Activated CD8-positive, alpha-beta T cell treated with anti-CD3 and anti-CD28 coated beads for 36 hours (primary cell): ENCODE measurements at regions of chr5 and their contacts with region 1.

Region 1: DNA sequence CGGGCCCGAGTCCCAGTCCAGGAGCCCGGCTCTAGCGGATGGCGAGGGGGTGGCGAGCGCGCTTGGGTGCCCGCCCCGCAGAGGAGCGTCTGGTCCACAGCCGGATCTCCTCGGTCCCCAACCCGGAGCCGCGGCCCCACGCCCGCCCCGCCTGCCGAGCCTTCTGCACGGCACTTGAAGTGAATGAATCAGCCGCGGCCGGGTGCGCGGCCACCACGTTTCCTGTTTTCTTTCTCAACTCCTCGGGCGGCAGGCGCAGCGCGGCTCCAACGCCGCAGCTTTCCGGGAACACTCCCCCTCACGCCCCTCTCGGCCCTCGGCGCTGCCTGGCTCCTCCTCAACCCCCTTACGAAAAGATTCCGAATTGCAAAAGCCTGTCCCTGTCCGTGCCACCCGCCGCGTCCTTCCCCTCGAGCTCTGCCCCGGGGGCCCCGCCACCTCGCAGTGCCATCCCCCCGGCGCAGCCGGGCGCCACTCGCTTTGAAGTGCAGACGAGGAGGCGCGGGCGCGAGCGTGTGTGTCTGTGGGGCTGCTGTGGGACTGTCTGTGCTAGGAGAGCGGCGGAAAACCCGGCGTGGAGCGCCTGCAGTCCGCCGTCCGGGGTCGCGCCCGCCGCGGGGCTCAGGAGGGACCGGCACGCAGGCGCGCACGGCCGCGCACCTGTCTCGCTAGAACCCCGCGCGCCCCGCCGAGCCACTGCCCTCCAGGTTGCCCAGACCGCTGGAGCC is 456.6 kb downstream of the RAB3C start:
- DNase-seq: peak; percentile 96
- ATAC-seq: peak; percentile 74
- H3K4me3 Mint-ChIP-seq: peak overlapping the region; percentile 89
- H3K27ac Mint-ChIP-seq: peak overlapping the region; percentile 85
- H3K4me1 Mint-ChIP-seq: peaks cover 38% of the 10 kb centered on the region
- H3K27me3 Mint-ChIP-seq: no peaks in the 10 kb centered on the region
- CTCF ChIP-seq: no peak

Region 2: GRCh38 chr5:59086024-59086423 is 46.6 kb after region 1 on chr5:
- CTCF ChIA-PET with region 1: interaction called, 15 read pairs
- POLR2A ChIA-PET with region 1: no interaction called
- intact Hi-C with region 1: no loop called
- DNase-seq: no peak
- ATAC-seq: no peak
- H3K4me3 Mint-ChIP-seq: no peak overlapping the region
- H3K27ac Mint-ChIP-seq: no peak overlapping the region
- H3K4me1 Mint-ChIP-seq: no peaks in the 10 kb centered on the region
- H3K27me3 Mint-ChIP-seq: peaks cover 4% of the 10 kb centered on the region
- CTCF ChIP-seq: no peak

Region 3: DNA sequence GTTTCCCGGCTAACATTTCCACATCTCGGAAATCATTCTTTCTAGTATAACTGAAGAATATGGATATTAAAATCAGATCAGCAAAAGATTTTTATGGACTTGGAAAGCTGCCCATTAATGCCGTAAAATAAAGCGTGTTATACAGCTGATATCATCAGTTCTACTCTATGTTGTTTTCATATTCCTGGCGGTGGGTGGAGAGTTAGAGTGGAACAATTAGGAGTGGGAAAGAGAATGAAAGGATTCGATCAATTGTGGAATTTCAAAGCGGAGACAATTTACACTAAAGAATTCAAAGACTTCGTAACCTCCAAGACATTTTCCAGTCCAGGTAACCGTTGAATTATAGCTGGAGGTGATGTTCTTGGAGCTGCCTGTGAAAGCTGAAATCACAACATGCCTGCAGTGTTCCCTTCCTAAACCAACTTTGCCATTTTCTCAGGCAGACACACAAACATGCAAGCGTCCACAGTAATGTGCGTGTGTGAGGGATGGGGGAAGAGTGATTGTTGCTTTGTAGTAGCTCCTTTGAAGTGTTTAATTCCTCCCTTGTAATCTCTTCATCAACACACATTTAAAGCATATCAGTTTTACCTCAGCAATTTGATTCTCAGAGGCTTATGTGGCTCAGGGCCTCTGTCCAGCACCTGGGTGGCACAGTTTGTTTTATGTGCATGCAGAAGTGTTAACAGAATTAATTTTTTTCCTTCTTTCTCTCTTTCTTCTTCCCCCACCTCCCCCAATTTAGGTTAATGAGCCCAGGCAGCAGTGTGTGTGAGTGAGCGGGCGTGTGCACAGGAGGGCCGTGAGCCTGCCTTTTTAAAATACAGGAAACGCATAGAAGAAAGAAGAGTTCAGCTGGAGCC is 87.5 kb after region 1 on chr5:
- CTCF ChIA-PET with region 1: interaction called, 36 read pairs
- POLR2A ChIA-PET with region 1: interaction called, 35 read pairs
- intact Hi-C with region 1: loop called (anchors 2 kb)
- DNase-seq: no peak
- ATAC-seq: peak; percentile 11
- H3K4me3 Mint-ChIP-seq: no peak overlapping the region
- H3K27ac Mint-ChIP-seq: no peak overlapping the region
- H3K4me1 Mint-ChIP-seq: peaks cover 33% of the 10 kb centered on the region
- H3K27me3 Mint-ChIP-seq: no peaks in the 10 kb centered on the region
- CTCF ChIP-seq: no peak

Region 4: GRCh38 chr5:59158165-59158564 is 118.7 kb after region 1 on chr5:
- CTCF ChIA-PET with region 1: interaction called, 33 read pairs
- POLR2A ChIA-PET with region 1: no interaction called
- intact Hi-C with region 1: no loop called
- DNase-seq: no peak
- ATAC-seq: peak; percentile 36
- H3K4me3 Mint-ChIP-seq: no peak overlapping the region
- H3K27ac Mint-ChIP-seq: no peak overlapping the region
- H3K4me1 Mint-ChIP-seq: peaks cover 22% of the 10 kb centered on the region
- H3K27me3 Mint-ChIP-seq: no peaks in the 10 kb centered on the region
- CTCF ChIP-seq: no peak

Region 5: DNA sequence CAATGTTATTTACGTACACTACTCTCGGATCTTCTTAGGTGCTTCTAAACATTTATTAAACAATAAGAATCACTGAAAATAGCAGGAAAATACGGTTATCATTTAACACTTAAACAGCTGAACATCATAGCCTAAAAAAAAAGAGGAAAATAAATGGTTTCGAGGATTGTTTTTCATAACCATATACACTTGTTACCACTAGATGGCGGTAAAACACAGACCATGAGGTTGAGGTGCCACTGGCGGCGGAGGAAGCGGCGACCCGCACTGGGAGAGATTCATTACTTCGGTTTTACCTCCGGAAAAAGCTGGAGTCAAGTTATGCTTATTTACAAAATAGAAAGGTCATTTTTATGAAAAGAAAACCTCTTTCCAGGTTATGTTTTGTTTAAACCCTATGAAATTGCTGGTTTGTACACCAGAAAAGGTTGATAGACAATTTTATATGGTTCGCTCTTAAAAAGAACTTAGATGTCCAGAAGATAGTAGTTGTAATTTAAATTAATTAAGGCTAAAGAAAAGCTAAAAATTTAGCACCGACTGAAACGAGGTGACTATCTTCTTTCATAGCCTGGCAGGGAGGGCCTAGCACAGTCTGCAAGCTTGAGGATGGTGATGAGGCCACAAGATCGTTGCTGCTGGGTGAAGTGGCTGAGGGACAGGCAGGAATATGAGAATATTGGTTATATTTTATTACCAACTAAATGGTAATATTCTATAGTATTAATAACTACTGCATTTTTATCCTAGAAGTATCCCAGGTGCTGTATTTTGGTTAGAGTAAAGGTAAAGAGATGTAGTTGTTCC is 149.2 kb after region 1 on chr5:
- CTCF ChIA-PET with region 1: interaction called, 12 read pairs
- POLR2A ChIA-PET with region 1: no interaction called
- intact Hi-C with region 1: no loop called
- DNase-seq: peak; percentile 73
- ATAC-seq: peak; percentile 75
- H3K4me3 Mint-ChIP-seq: no peak overlapping the region
- H3K27ac Mint-ChIP-seq: no peak overlapping the region
- H3K4me1 Mint-ChIP-seq: peaks cover 3% of the 10 kb centered on the region
- H3K27me3 Mint-ChIP-seq: peaks cover 10% of the 10 kb centered on the region
- CTCF ChIP-seq: peak; percentile 90